Posterior vena cava (tissue), 2 donors: ENCODE measurements at regions of chr13 and their contacts with region 1.

Region 1: GRCh38 chr13:37608750-37609339 is 10.3 kb upstream of the POSTN start:
- DNase-seq: no peak

Region 2: GRCh38 chr13:37074703-37075102 is 534.1 kb before region 1 on chr13:
- intact Hi-C with region 1: loop called in 1 of 2 experiments (anchors 5 kb)
- DNase-seq: no peak

Region 3: DNA sequence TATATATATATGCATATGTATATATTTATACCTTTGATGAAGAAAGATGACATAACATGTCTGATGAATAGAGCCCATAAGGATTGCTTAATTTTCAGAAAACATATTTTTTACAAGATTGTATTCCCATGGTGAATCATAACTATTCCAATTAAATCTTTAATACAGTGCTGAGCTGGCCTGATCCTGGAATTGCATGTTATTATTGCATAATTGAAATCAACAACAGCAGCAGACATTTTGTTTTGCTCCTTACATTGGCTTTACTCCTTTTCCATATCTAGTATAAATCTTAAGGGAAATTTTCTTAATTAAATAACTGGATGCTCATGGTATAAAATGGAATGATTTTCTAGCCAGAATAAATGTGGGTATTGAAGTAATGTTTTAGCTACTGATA is 32.2 kb before region 1 on chr13:
- intact Hi-C with region 1: no loop called
- DNase-seq: no peak

Region 4: GRCh38 chr13:37791699-37792098 is 182.9 kb after region 1 on chr13:
- intact Hi-C with region 1: no loop called
- DNase-seq: no peak